ENCODE measurements at regions of chr20 and their contacts with region 1.

Region 1: GRCh38 chr20:13684566-13685222 is 46.0 kb upstream of the TASP1 start:
- DNase-seq: no peak
- ATAC-seq: no peak
- H3K4me3 ChIP-seq: no peak overlapping the region
- H3K27ac ChIP-seq: no peak overlapping the region
- H3K4me1 ChIP-seq: peaks cover 0 to 3% of the 10 kb centered on the region in 2 donors
- H3K27me3 ChIP-seq: no peaks in the 10 kb centered on the region

Region 2: GRCh38 chr20:13744352-13744751 is 59.7 kb after region 1 on chr20:
- intact Hi-C with region 1: loop called in 1 of 2 experiments (anchors 5 kb)
- DNase-seq: no peak
- ATAC-seq: no peak
- H3K4me3 ChIP-seq: no peak overlapping the region
- H3K27ac ChIP-seq: no peak overlapping the region
- H3K4me1 ChIP-seq: peaks cover 0 to 2% of the 10 kb centered on the region in 2 donors
- H3K27me3 ChIP-seq: no peaks in the 10 kb centered on the region

Region 3: GRCh38 chr20:13817342-13817741 is 132.6 kb after region 1 on chr20:
- intact Hi-C with region 1: no loop called
- DNase-seq: no peak
- ATAC-seq: no peak
- H3K4me3 ChIP-seq: no peak overlapping the region
- H3K27ac ChIP-seq: no peak overlapping the region
- H3K4me1 ChIP-seq: no peaks in the 10 kb centered on the region
- H3K27me3 ChIP-seq: no peaks in the 10 kb centered on the region

Region 4: GRCh38 chr20:14055127-14055742 is 370.5 kb after region 1 on chr20:
- intact Hi-C with region 1: no loop called
- DNase-seq: no peak
- ATAC-seq: peak; percentile 76
- H3K4me3 ChIP-seq: no peak overlapping the region
- H3K27ac ChIP-seq: no peak overlapping the region
- H3K4me1 ChIP-seq: no peaks in the 10 kb centered on the region
- H3K27me3 ChIP-seq: no peaks in the 10 kb centered on the region

Measured in aorta (tissue), 5 donors.